ENCODE measurements at regions of chr3 and their contacts with region 1.

Region 1: DNA sequence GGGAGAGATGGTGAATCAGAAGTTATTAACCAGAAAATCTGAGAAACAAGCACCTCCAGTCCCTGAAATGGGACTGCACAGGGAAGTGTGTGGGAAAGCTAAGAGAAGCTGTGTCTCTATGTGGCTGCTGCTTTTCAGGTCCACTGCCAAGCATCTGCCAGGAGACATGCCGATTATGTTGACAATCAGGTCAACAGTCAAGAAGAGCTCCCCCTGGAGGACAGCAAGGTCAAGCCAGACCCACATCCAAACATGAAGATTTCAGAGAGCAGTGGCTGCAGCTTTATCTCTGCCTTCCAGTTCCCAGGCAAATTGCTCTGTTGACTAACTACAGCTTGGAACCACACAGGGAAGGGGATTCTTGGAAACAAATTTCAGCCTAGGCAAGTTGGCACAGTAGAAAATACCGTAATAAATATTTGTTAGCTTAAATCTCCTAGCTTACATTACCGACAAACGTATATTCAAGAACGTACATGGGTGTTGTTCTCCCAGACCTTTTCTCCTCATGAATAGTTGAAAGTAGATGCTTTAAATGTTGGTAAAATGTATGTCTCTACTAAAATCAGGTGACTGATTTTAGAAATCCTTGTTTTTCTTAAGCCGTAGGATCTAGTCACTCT is 394.5 kb upstream of the RARB start:
- DNase-seq: peak; percentile 37
- ATAC-seq: peak; percentile 82
- H3K4me3 ChIP-seq: no peak overlapping the region
- H3K27ac ChIP-seq: no peak overlapping the region
- H3K4me1 ChIP-seq: no peaks in the 10 kb centered on the region
- H3K27me3 ChIP-seq: peaks cover 17% of the 10 kb centered on the region; the same call in 1 of the 2 replicates
- CTCF ChIP-seq: peak; percentile 25 to 78 (median 68); a peak in 5 of 6 replicates
- POLR2A ChIP-seq: no peak
- RAD21 ChIP-seq: peak; percentile 39

Region 2: GRCh38 chr3:24773798-24774197 is 259.7 kb before region 1 on chr3:
- CTCF ChIA-PET with region 1: interaction called, 21 read pairs
- POLR2A ChIA-PET with region 1: no interaction called
- RAD21 ChIA-PET with region 1: no interaction called
- intact Hi-C with region 1: loop called (anchors 1 kb)
- DNase-seq: peak; percentile 46
- ATAC-seq: peak; percentile 94
- H3K4me3 ChIP-seq: no peak overlapping the region
- H3K27ac ChIP-seq: no peak overlapping the region
- H3K4me1 ChIP-seq: no peaks in the 10 kb centered on the region
- H3K27me3 ChIP-seq: no peaks in the 10 kb centered on the region; the same call in 1 of the 2 replicates
- CTCF ChIP-seq: peak; percentile 54 to 89 (median 82); a peak in 5 of 6 replicates
- POLR2A ChIP-seq: no peak
- RAD21 ChIP-seq: peak; percentile 77

Region 3: DNA sequence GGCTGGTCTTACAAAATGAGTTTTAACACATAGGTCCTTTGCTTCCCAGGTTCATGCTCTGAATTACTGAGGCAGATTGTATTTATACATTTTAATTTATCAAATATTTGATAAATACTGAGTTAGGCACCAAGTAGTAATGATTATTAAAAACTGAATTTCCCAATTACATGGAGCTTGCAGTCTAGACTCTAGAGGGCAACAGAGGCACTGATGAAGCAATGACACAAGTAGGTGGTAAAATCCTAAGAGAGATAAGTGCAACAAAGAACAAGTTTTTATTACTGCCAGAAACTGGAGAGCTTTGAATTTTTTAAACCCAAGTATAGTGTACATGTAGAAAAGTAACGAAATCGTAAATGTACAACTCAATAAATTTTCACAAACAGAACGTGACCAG is 11.7 kb before region 1 on chr3:
- CTCF ChIA-PET with region 1: interaction called, 16 read pairs
- POLR2A ChIA-PET with region 1: no interaction called
- RAD21 ChIA-PET with region 1: interaction called in 1 of 2 experiments, 3 read pairs
- intact Hi-C with region 1: no loop called
- DNase-seq: no peak
- ATAC-seq: no peak
- H3K4me3 ChIP-seq: no peak overlapping the region
- H3K27ac ChIP-seq: no peak overlapping the region
- H3K4me1 ChIP-seq: no peaks in the 10 kb centered on the region
- H3K27me3 ChIP-seq: peaks cover 3% of the 10 kb centered on the region; the same call in 1 of the 2 replicates
- CTCF ChIP-seq: peak in 2 of 3 experiments; percentile 31 to 38; a peak in 3 of 6 replicates
- POLR2A ChIP-seq: no peak
- RAD21 ChIP-seq: peak; percentile 28

Measured in HCT116 (cell line).